Sigmoid colon (tissue), 7 donors: ENCODE measurements at regions of chr15 and their contacts with region 1.

Region 1: DNA sequence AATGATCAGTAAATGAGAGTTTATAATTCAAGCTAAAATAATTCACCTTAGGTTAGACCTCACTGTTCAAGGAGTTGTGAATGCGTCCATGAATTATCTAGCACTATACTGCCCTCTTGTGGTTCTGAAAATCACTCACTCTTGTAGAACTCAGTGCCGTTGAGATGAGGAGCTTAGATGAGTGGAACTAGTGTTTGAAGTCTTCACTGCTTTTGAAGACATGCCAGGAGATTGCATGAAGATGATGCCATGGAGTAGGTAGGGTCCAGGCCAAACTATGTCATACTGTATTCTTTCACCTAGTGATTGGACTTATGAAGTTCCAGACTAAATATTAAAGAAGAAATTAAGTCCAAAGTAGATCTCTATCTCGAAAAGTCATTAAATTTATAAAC is 28.8 kb downstream of the LYSMD4 start:
- DNase-seq: no peak
- H3K4me3 ChIP-seq: no peak overlapping the region
- H3K27ac ChIP-seq: peak overlapping the region; percentile 60 to 87 (median 79)
- H3K4me1 ChIP-seq: peaks cover 0 to 47% (median 30%) of the 10 kb centered on the region in 4 donors
- H3K27me3 ChIP-seq: no peaks in the 10 kb centered on the region
- CTCF ChIP-seq: peak; percentile 68 to 83 (median 74)
- EP300 ChIP-seq: no peak
- POLR2A ChIP-seq: no peak

Region 2: GRCh38 chr15:99275525-99276128 is 428.8 kb before region 1 on chr15:
- intact Hi-C with region 1: loop called (anchors 5 kb)
- DNase-seq: no peak
- H3K4me3 ChIP-seq: no peak overlapping the region
- H3K27ac ChIP-seq: no peak overlapping the region
- H3K4me1 ChIP-seq: peaks cover 0 to 4% (median 0%) of the 10 kb centered on the region in 4 donors
- H3K27me3 ChIP-seq: no peaks in the 10 kb centered on the region
- CTCF ChIP-seq: no peak
- EP300 ChIP-seq: no peak
- POLR2A ChIP-seq: no peak

Region 3: GRCh38 chr15:99282121-99282520 is 422.3 kb before region 1 on chr15:
- intact Hi-C with region 1: loop called (anchors 5 kb)
- DNase-seq: no peak
- H3K4me3 ChIP-seq: no peak overlapping the region
- H3K27ac ChIP-seq: no peak overlapping the region
- H3K4me1 ChIP-seq: no peaks in the 10 kb centered on the region
- H3K27me3 ChIP-seq: no peaks in the 10 kb centered on the region
- CTCF ChIP-seq: no peak
- EP300 ChIP-seq: no peak
- POLR2A ChIP-seq: no peak

Region 4: GRCh38 chr15:99343881-99344551 is 360.4 kb before region 1 on chr15:
- intact Hi-C with region 1: loop called (anchors 5 kb)
- DNase-seq: no peak
- H3K4me3 ChIP-seq: no peak overlapping the region
- H3K27ac ChIP-seq: no peak overlapping the region
- H3K4me1 ChIP-seq: peaks cover 0 to 7% (median 0%) of the 10 kb centered on the region in 4 donors
- H3K27me3 ChIP-seq: no peaks in the 10 kb centered on the region
- CTCF ChIP-seq: peak; percentile 15 to 42 (median 40)
- EP300 ChIP-seq: no peak
- POLR2A ChIP-seq: no peak

Region 5: GRCh38 chr15:99409097-99409473 is 295.4 kb before region 1 on chr15:
- intact Hi-C with region 1: loop called (anchors 5 kb)
- DNase-seq: peak; percentile 80
- H3K4me3 ChIP-seq: no peak overlapping the region
- H3K27ac ChIP-seq: peak overlapping the region; percentile 42 to 64 (median 48)
- H3K4me1 ChIP-seq: peaks cover 0 to 23% (median 20%) of the 10 kb centered on the region in 4 donors
- H3K27me3 ChIP-seq: no peaks in the 10 kb centered on the region
- CTCF ChIP-seq: peak; percentile 16 to 47 (median 43)
- EP300 ChIP-seq: no peak
- POLR2A ChIP-seq: no peak

Region 6: DNA sequence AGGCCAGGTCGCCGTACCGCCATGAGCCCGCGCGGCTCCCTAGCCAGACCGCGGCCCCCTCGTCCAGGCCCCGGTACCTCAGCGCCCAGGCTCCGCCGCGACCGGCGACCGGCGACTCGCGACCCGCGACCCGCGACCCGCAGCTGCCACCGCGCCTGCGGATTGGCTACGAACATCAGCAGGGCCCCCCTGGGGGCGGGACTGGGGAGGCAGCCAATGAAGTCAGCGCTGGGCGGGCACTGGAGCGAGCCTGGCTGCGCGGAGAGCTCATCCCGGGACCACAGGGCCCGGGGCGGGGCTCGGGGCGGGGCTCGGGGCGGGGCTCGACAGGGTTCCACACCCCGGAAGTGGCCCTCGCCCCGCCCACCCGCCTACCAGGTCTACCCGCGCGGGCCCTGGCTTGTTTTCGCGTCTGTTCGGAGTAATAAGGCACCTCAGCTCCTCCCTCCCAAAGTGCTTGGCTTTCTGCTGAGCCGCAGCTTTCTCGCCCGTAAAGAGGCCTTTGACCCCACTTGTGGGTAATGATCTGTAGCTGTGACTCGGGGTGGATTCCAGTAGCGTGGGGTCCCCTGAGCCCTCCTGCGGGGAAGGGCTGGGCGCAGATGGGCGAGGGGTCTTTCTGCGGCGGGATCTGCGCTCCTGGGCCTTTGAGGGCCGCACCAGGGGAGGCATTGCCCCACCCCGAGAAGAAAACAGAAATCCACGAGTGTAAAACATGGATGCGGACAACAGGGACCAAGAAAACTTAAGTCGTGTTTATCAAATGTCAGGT is 29.0 kb after region 1 on chr15 and contains the start of gene LYSMD4:
- intact Hi-C with region 1: loop called (anchors 2 kb)
- DNase-seq: peak; percentile 99
- H3K4me3 ChIP-seq: peak within 1 kb of the TSS; percentile 59 to 95 (median 90)
- H3K27ac ChIP-seq: peak within 1 kb of the TSS; percentile 87 to 95 (median 90)
- H3K4me1 ChIP-seq: peaks cover 0 to 32% (median 20%) of the 10 kb centered on the region in 4 donors
- H3K27me3 ChIP-seq: no peaks in the 10 kb centered on the region
- CTCF ChIP-seq: no peak
- EP300 ChIP-seq: no peak
- POLR2A ChIP-seq: peak; percentile 18 to 25
- total RNA-seq, gene LYSMD4: 7.1 to 15.3 (median 8.8) TPM